GM12878 (cell line): ENCODE measurements at regions of chr19 and their contacts with region 1.

Region 1: GRCh38 chr19:6393074-6393983 is at the start of gene GTF2F1:
- DNase-seq: peak; percentile 80
- ATAC-seq: peak; percentile 95
- H3K4me3 ChIP-seq: peak within 1 kb of the TSS; percentile 99
- H3K27ac ChIP-seq: peak within 1 kb of the TSS; percentile 93
- H3K4me1 ChIP-seq: peaks cover 11% of the 10 kb centered on the region
- H3K27me3 ChIP-seq: no peaks in the 10 kb centered on the region
- CTCF ChIP-seq: peak in 2 of 3 experiments; percentile 23 to 28; a peak in 2 of 6 replicates
- EP300 ChIP-seq: peak in 1 of 2 experiments; percentile 38; a peak in 1 of 4 replicates
- POLR2A ChIP-seq: peak; percentile 64
- RAD21 ChIP-seq: no peak
- polyA plus RNA-seq, gene GTF2F1: 4.5 to 8.7 TPM

Region 2: DNA sequence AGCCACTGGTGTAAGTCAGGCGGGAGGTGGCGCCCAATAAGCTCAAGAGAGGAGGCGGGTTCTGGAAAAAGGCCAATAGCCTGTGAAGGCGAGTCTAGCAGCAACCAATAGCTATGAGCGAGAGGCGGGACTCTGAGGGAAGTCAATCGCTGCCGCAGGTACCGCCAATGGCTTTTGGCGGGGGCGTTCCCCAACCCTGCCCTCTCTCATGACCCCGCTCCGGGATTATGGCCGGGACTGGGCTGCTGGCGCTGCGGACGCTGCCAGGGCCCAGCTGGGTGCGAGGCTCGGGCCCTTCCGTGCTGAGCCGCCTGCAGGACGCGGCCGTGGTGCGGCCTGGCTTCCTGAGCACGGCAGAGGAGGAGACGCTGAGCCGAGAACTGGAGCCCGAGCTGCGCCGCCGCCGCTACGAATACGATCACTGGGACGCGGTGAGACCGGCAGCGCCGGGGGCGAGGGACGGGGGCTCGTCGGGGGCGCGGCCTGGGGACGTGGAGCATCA is 20.7 kb before region 1 on chr19 and contains the start of gene ALKBH7:
- CTCF ChIA-PET with region 1: no interaction called
- POLR2A ChIA-PET with region 1: interaction called, 12 read pairs
- RAD21 ChIA-PET with region 1: interaction called, 5 read pairs
- SMC1A ChIA-PET with region 1: interaction called, 4 read pairs
- in situ Hi-C with region 1: no loop called
- intact Hi-C with region 1: no loop called
- DNase-seq: peak; percentile 99
- ATAC-seq: peak; percentile 94
- H3K4me3 ChIP-seq: peak within 1 kb of the TSS; percentile 90
- H3K27ac ChIP-seq: peak within 1 kb of the TSS; percentile 88
- H3K4me1 ChIP-seq: peaks cover 2% of the 10 kb centered on the region; the same call in 1 of the 2 replicates
- H3K27me3 ChIP-seq: no peaks in the 10 kb centered on the region
- CTCF ChIP-seq: no peak
- EP300 ChIP-seq: no peak
- POLR2A ChIP-seq: peak; percentile 90
- RAD21 ChIP-seq: no peak
- polyA plus RNA-seq, gene ALKBH7: 0.31 to 5.8 TPM

Region 3: GRCh38 chr19:6424939-6425731 is 31.8 kb after region 1 on chr19:
- CTCF ChIA-PET with region 1: no interaction called
- POLR2A ChIA-PET with region 1: interaction called, 5 read pairs
- RAD21 ChIA-PET with region 1: interaction called, 4 read pairs
- SMC1A ChIA-PET with region 1: interaction called, 3 read pairs
- in situ Hi-C with region 1: no loop called
- intact Hi-C with region 1: loop called (anchors 1 kb)
- DNase-seq: peak; percentile 100
- ATAC-seq: peak; percentile 93
- H3K4me3 ChIP-seq: peak overlapping the region; percentile 6; the same call in 1 of the 2 replicates
- H3K27ac ChIP-seq: peak overlapping the region; percentile 58
- H3K4me1 ChIP-seq: peaks cover 5% of the 10 kb centered on the region
- H3K27me3 ChIP-seq: no peaks in the 10 kb centered on the region
- CTCF ChIP-seq: no peak
- EP300 ChIP-seq: no peak
- POLR2A ChIP-seq: peak; percentile 76
- RAD21 ChIP-seq: no peak

Region 4: DNA sequence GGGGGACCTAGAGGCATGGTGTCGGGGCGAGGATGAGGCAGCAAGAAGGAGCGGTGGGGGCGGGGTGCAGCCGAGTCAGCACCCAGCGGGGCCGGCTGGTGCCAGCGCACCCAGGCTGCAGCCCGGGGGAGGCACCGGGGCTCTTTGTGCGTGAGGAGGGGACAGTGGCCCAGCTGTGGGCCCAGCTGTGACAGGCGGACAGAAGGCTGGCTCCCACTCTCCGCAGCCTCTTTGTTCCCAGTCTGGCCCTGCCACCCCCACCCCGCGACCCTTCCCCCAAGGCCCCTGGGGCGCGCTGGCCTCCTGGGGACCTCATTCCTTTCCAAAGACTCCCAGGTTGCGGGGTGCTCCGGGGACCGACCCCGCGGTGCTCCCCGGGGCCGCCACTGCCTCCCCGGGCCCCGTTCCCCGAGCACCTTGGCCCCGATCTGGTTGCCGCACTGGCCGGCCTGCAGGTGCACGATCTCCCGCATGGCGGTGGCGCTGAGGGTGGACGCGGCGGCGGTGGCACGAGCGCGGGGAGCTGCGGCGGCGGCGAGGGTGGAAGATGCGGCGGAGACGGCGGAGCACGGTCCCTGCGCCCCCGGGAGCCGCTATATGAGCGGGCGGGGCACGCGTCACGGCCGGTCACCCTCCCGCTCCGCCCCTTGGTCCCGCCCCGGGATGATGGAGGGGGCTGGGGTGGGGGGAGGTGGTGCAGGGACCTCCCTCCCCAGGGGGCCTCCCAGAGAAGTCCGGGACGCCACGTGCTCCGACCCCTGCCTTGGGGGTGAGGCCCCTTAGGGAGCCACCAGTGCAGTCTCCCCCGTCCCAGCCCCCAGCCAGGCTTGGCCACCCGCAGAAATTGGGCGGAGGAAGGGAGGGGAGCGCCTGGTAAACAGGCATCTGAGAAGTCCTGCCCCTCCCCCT is 108.7 kb after region 1 on chr19 and contains the start of gene TUBB4A:
- CTCF ChIA-PET with region 1: interaction called, 4 read pairs
- POLR2A ChIA-PET with region 1: no interaction called
- RAD21 ChIA-PET with region 1: no interaction called
- SMC1A ChIA-PET with region 1: no interaction called
- in situ Hi-C with region 1: no loop called
- intact Hi-C with region 1: loop called (anchors 10 kb)
- DNase-seq: no peak
- ATAC-seq: peak; percentile 77
- H3K4me3 ChIP-seq: peak within 1 kb of the TSS; percentile 71
- H3K27ac ChIP-seq: no peak within 1 kb of the TSS
- H3K4me1 ChIP-seq: peaks cover 2% of the 10 kb centered on the region
- H3K27me3 ChIP-seq: peaks cover 0 to 2% of the 10 kb centered on the region in 2 experiments; a peak in 3 of 4 replicates
- CTCF ChIP-seq: peak in 1 of 3 experiments; percentile 14; a peak in 1 of 6 replicates
- EP300 ChIP-seq: no peak
- POLR2A ChIP-seq: peak; percentile 70
- RAD21 ChIP-seq: no peak
- polyA plus RNA-seq, gene TUBB4A: 0.79 to 0.85 TPM

Region 5: GRCh38 chr19:7903244-7904073 is 1510.1 kb after region 1 on chr19 and contains the start of gene MAP2K7:
- CTCF ChIA-PET with region 1: no interaction called
- POLR2A ChIA-PET with region 1: interaction called, 10 read pairs
- RAD21 ChIA-PET with region 1: no interaction called
- SMC1A ChIA-PET with region 1: no interaction called
- in situ Hi-C with region 1: no loop called
- intact Hi-C with region 1: no loop called
- DNase-seq: peak; percentile 99
- ATAC-seq: peak; percentile 89
- H3K4me3 ChIP-seq: peak within 1 kb of the TSS; percentile 95
- H3K27ac ChIP-seq: peak within 1 kb of the TSS; percentile 81
- H3K4me1 ChIP-seq: peaks cover 14% of the 10 kb centered on the region
- H3K27me3 ChIP-seq: no peaks in the 10 kb centered on the region
- CTCF ChIP-seq: peak; percentile 65 to 99 (median 90); a peak in 5 of 6 replicates
- EP300 ChIP-seq: no peak; a peak in 1 of 4 replicates
- POLR2A ChIP-seq: peak; percentile 92
- RAD21 ChIP-seq: peak; percentile 36; the same call in 1 of the 2 replicates
- polyA plus RNA-seq, gene MAP2K7: 0.34 to 0.95 TPM